Sigmoid colon (tissue), 7 donors: ENCODE measurements at regions of chr22 and their contacts with region 1.

Region 1: GRCh38 chr22:40645579-40646197 is 9.2 kb upstream of the MRTFA start:
- DNase-seq: no peak
- H3K4me3 ChIP-seq: no peak overlapping the region
- H3K27ac ChIP-seq: peak overlapping the region; percentile 49 to 67 (median 63)
- H3K4me1 ChIP-seq: peaks cover 0 to 9% (median 6%) of the 10 kb centered on the region in 4 donors
- H3K27me3 ChIP-seq: no peaks in the 10 kb centered on the region
- CTCF ChIP-seq: no peak
- EP300 ChIP-seq: no peak
- POLR2A ChIP-seq: no peak

Region 2: GRCh38 chr22:40436505-40437451 is 208.9 kb before region 1 on chr22:
- intact Hi-C with region 1: loop called (anchors 1 kb)
- DNase-seq: no peak
- H3K4me3 ChIP-seq: peak overlapping the region in 3 of 4 donors; percentile 4 to 33 (median 9)
- H3K27ac ChIP-seq: peak overlapping the region; percentile 65 to 73 (median 67)
- H3K4me1 ChIP-seq: peaks cover 0 to 36% (median 24%) of the 10 kb centered on the region in 4 donors
- H3K27me3 ChIP-seq: no peaks in the 10 kb centered on the region
- CTCF ChIP-seq: peak; percentile 64 to 77 (median 64)
- EP300 ChIP-seq: no peak
- POLR2A ChIP-seq: no peak

Region 3: DNA sequence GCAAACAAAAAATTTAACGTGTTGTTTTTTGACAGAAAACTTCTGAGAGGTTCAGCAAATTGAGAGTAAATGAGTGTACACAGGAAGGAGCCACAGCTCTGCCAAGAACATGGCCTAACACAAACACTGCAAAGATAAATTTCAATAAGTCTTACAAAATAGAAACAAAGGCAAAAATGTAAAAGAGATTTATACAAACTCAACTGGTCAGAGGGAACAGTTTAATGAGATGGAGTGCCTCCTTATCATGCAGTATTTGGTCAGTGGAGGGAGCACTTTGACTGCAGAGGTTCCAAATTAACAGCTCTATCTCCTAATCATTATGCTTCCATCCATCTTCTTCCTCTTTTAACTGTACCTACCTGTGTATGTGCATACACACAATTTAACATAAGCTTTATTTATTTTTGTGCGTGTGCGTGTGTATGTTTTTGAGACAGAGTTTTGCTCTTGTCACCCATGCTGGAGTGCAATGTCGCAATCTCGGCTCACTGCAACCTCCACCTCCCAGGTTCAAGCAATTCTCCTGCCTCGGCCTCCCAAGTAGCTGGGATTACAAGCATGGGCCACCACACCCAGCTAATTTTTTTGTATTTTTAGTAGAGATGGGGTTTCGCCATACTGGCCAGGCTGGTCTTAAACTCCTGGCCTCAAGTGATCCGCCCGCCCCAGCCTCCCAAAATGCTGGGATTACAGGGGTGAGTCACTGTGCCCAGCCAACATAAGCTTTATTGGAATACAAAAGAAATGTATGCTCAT is 121.1 kb before region 1 on chr22:
- intact Hi-C with region 1: loop called (anchors 5 kb)
- DNase-seq: no peak
- H3K4me3 ChIP-seq: no peak overlapping the region
- H3K27ac ChIP-seq: no peak overlapping the region
- H3K4me1 ChIP-seq: peaks cover 0 to 26% (median 7%) of the 10 kb centered on the region in 4 donors
- H3K27me3 ChIP-seq: no peaks in the 10 kb centered on the region
- CTCF ChIP-seq: peak in 1 of 4 experiments; percentile 16
- EP300 ChIP-seq: no peak
- POLR2A ChIP-seq: no peak